ENCODE measurements at regions of chr16 and their contacts with region 1.

Region 1: DNA sequence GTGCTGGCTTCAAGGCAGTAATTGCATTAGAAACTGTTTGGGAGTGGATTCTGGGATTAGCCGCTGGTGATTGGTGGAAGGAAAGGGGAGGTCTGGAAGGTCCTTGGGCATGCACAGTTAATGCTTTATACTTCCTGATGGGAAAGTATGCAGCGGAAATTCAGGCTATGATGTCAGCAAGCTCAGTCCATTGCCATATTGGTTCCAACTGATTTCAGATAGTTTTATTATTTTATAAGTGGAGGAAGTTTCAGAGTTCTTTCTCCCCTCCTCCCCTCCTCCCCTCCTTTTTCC is 8.1 kb upstream of the CMTR2 start:
- DNase-seq: no peak
- H3K27ac ChIP-seq: no peak overlapping the region
- CTCF ChIP-seq: no peak

Region 2: GRCh38 chr16:71311553-71312158 is 14.4 kb after region 1 on chr16:
- CTCF ChIA-PET with region 1: interaction called, 10 read pairs
- POLR2A ChIA-PET with region 1: no interaction called
- DNase-seq: peak; percentile 13
- H3K27ac ChIP-seq: no peak overlapping the region
- CTCF ChIP-seq: peak; percentile 63